Activated naive CD4-positive, alpha-beta T cell treated with anti-CD3 and anti-CD28 coated beads for 36 hours (primary cell): ENCODE measurements at regions of chr18 and their contacts with region 1.

Region 1: DNA sequence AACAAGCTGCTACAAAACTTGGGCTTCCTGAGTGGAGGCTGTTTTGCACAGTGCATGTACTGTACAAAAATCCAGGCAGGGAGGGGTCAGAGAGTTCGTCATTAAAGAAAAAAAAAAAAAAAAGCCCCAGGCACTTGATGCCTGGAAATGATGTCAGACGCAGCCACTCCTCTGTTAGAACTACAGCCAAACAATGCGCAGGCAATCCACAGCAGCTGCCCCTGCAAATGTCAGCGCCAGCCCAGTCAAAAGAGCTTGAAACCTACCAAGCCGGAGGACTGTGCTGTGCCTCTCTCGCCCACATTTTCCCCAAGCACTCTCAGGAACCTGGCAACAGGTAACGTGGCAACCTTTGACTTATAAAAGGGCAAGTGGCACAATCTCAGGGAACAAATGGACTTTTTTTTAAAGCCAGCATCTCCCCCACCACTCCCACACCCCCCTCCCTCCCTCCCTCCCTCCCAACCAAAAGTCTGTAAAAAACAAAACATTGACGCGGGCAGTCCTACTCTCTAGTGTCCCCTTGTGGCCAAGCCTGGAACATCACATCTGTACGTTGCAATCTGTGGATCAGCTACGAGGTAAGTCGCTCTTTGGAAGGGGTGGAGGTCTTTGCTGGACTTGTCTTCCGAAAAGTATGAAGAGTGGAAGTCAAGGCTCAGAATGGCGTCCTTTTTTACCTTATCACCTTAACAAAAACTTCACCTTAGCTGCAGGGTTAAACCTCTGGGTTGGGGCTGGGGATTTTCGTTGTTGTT is 144.1 kb downstream of the TGIF1 start:
- DNase-seq: peak; percentile 95
- H3K4me3 Mint-ChIP-seq: peak overlapping the region; percentile 92
- H3K27ac Mint-ChIP-seq: peak overlapping the region; percentile 100
- H3K4me1 Mint-ChIP-seq: peaks cover 48% of the 10 kb centered on the region
- H3K27me3 Mint-ChIP-seq: no peaks in the 10 kb centered on the region

Region 2: GRCh38 chr18:3151399-3152264 is 442.5 kb before region 1 on chr18:
- CTCF ChIA-PET with region 1: no interaction called
- intact Hi-C with region 1: no loop called
- DNase-seq: no peak
- H3K4me3 Mint-ChIP-seq: no peak overlapping the region
- H3K27ac Mint-ChIP-seq: no peak overlapping the region
- H3K4me1 Mint-ChIP-seq: peaks cover 6% of the 10 kb centered on the region
- H3K27me3 Mint-ChIP-seq: no peaks in the 10 kb centered on the region

Region 3: DNA sequence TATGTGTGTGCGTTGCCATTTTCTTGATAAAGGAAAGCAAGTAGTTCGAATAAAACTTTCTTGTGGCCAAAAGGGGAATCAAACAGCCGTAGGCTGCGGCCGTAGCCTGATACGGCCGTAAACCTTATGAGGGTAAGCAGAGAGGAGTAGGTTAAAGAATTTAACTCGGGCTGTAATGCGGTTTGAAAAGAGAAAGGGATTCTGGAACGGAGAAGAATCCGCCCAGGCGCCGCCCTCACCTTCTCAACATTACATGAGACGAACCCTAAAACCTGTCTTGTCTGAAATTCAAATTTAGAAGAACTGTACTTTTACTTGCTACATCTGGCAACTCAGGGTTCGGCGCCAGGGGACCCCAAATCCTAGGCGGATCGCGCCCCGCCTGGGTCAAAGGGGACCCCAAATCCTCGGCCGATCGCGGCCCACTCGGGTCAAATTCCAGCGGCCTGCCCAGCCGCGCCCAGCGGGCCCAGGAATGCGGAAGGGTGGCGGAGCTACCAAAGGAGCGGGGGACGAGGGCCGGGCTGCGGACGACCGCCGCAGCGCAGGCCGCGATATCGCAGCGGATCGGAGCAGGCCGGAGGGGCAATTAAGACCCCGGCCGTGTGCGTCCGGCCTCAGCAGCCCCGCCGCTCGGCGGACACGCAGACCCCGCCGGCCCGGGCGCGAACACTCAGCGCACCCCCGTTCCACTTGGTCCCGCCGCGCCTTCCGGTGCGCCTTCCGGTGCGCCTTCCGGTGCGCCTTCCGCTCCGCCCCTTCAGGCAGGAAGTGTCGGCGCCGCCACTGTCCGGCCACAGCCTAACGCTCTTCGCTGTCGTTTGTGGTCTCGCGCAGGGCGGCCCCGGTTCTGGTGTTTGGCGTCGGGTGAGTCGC is 332.5 kb before region 1 on chr18 and contains the start of gene MYL12B:
- CTCF ChIA-PET with region 1: interaction called, 5 read pairs
- intact Hi-C with region 1: loop called (anchors 5 kb)
- DNase-seq: peak; percentile 79
- H3K4me3 Mint-ChIP-seq: peak within 1 kb of the TSS; percentile 92
- H3K27ac Mint-ChIP-seq: peak within 1 kb of the TSS; percentile 97
- H3K4me1 Mint-ChIP-seq: peaks cover 64% of the 10 kb centered on the region
- H3K27me3 Mint-ChIP-seq: no peaks in the 10 kb centered on the region
- total RNA-seq, gene MYL12B: 288 to 293 TPM

Region 4: DNA sequence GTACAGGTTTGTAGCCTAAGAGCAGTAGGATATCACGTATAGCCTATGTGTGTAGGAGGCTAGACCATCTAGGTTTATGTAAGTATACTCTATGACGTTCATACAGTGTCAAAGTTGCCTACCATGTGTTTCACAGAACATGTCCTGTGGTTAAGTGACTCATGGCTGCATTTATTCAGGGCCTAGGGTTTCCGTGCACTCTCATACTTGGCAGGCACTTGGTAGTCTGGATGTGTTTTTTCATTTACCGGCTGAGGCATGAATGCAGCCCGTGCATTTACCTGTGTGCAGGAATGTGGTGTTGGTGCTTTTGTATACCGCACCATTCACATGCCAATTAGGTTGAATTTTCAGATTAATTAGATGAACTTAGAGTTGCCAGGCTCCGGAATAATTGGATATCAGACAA is 288.7 kb before region 1 on chr18:
- CTCF ChIA-PET with region 1: no interaction called
- intact Hi-C with region 1: loop called (anchors 1 kb)
- DNase-seq: peak; percentile 66
- H3K4me3 Mint-ChIP-seq: no peak overlapping the region
- H3K27ac Mint-ChIP-seq: peak overlapping the region; percentile 37
- H3K4me1 Mint-ChIP-seq: peaks cover 14% of the 10 kb centered on the region
- H3K27me3 Mint-ChIP-seq: peaks cover 16% of the 10 kb centered on the region

Region 5: GRCh38 chr18:3447895-3448837 is 145.9 kb before region 1 on chr18:
- CTCF ChIA-PET with region 1: interaction called, 42 read pairs
- intact Hi-C with region 1: loop called (anchors 1 kb)
- DNase-seq: peak; percentile 90
- H3K4me3 Mint-ChIP-seq: peak overlapping the region; percentile 89
- H3K27ac Mint-ChIP-seq: peak overlapping the region; percentile 98
- H3K4me1 Mint-ChIP-seq: peaks cover 30% of the 10 kb centered on the region
- H3K27me3 Mint-ChIP-seq: no peaks in the 10 kb centered on the region

Region 6: DNA sequence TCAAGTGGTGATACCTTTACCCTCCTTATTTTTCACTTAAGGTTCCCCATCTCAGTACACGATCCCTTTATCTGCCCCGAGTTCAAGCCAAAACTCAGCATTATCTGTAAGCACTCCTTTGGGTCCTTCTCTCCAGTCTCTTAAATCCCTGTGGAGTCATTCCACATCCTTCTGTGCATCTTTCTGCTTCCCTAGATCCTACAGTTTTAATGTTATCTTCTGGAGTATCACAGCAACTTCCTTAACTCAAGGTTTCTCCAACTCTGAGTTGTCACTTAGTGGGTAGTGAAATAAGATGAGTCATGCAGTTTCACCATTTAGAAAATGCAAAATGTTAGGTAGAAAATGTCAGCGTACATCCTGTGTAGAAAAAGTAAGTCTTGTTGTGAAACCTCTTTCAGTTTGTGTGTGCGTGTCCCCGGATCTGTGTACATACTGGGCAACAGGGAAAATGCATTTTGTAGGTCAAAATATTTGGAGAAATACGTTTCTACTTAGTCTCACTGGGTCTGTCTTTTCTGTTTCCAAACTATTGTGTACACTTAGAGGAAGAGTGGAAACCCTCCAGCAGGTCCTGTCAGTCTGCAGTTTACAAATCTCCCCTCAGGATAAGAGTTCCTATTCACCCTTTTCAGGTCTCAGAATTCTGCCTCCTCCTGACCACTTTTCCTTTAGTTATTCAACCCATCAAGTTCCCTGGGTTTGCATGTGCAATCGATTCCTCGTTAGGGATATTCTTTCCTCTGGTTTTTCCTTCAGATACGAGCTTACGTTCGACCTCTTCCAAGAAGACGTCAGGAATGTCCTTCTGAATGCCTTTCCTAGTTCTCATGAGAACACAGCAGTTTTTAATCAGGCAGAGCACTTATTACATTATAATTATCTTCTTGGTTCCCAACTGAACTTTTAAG is 10.7 kb after region 1 on chr18:
- CTCF ChIA-PET with region 1: interaction called, 49 read pairs
- intact Hi-C with region 1: loop called (anchors 1 kb)
- DNase-seq: peak; percentile 60
- H3K4me3 Mint-ChIP-seq: no peak overlapping the region
- H3K27ac Mint-ChIP-seq: no peak overlapping the region
- H3K4me1 Mint-ChIP-seq: peaks cover 13% of the 10 kb centered on the region
- H3K27me3 Mint-ChIP-seq: no peaks in the 10 kb centered on the region

Region 7: DNA sequence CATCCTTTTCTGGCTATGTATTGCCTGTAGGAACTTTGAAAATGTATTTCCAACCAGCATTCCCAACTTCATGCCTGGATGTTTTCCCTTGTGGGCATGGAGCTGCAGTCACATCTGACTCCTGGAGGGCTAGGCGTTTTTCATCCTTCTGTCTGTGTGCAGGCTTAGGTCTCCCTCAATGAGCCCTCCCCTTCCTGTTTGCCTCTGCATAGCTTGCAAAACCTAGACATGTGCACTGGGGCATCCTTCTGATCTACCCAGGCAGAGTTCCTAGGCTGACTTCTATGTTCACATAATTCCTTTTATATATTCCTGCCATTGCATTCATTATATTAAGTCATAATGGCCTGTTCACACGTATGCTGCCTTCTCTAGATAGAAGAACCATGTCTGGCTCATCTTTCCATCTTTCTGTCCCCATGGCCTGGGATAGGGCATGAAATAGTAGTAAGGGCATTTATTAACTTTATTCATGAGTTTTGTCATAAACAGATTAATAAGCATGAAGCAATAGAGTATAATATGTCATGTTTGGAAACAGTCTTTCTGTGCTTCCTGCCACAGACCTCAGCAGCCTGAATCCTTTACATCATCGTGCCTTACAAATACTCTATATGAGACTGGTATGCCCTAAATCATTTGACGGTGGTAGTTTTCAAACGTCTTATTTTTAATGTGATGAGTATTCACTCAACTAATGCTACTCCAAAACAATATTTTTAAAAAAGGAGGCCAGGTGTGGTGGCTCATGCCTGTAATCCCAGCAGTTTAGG is 51.5 kb after region 1 on chr18:
- CTCF ChIA-PET with region 1: interaction called, 6 read pairs
- intact Hi-C with region 1: loop called (anchors 1 kb)
- DNase-seq: no peak
- H3K4me3 Mint-ChIP-seq: no peak overlapping the region
- H3K27ac Mint-ChIP-seq: no peak overlapping the region
- H3K4me1 Mint-ChIP-seq: peaks cover 32% of the 10 kb centered on the region
- H3K27me3 Mint-ChIP-seq: no peaks in the 10 kb centered on the region

Region 8: GRCh38 chr18:3665780-3666525 is 71.9 kb after region 1 on chr18:
- CTCF ChIA-PET with region 1: interaction called, 63 read pairs
- intact Hi-C with region 1: loop called (anchors 1 kb)
- DNase-seq: peak; percentile 84
- H3K4me3 Mint-ChIP-seq: peak overlapping the region; percentile 38
- H3K27ac Mint-ChIP-seq: no peak overlapping the region
- H3K4me1 Mint-ChIP-seq: peaks cover 26% of the 10 kb centered on the region
- H3K27me3 Mint-ChIP-seq: no peaks in the 10 kb centered on the region

Region 9: DNA sequence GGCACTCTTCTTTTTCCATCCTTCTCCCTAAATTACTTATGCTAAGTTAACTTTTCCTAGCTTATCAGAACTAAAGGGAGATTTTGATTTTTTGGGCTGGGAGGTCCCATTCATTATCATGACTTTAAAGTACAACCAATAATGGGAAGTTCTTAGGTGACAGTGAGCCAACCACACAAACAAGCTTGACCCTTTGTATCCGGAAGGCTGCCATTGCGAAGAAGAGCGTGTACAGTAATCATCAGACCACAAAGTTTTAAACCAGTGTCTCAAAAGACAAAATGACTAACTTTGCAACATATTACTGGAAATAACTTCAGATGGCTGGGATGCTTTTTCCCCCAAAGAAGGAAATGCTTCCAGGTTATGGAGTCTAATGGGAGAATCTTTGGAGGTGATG is 154.0 kb after region 1 on chr18:
- CTCF ChIA-PET with region 1: no interaction called
- intact Hi-C with region 1: no loop called
- DNase-seq: no peak
- H3K4me3 Mint-ChIP-seq: no peak overlapping the region
- H3K27ac Mint-ChIP-seq: no peak overlapping the region
- H3K4me1 Mint-ChIP-seq: no peaks in the 10 kb centered on the region
- H3K27me3 Mint-ChIP-seq: peaks cover 5% of the 10 kb centered on the region